ENCODE measurements at regions of chr19 and their contacts with region 1.

Region 1: GRCh38 chr19:28793391-28794168 is 419.4 kb downstream of the UQCRFS1 start:
- DNase-seq: no peak
- ATAC-seq: peak; percentile 24 to 97 (median 62)
- H3K4me3 ChIP-seq: peak overlapping the region; percentile 30 to 61 (median 51)
- H3K27ac ChIP-seq: peak overlapping the region in 5 of 10 donors; percentile 12 to 52 (median 25)
- H3K4me1 ChIP-seq: peaks cover 0 to 4% (median 0%) of the 10 kb centered on the region in 9 donors
- H3K27me3 ChIP-seq: peaks cover 0 to 33% (median 13%) of the 10 kb centered on the region in 7 donors
- CTCF ChIP-seq: no peak

Region 2: DNA sequence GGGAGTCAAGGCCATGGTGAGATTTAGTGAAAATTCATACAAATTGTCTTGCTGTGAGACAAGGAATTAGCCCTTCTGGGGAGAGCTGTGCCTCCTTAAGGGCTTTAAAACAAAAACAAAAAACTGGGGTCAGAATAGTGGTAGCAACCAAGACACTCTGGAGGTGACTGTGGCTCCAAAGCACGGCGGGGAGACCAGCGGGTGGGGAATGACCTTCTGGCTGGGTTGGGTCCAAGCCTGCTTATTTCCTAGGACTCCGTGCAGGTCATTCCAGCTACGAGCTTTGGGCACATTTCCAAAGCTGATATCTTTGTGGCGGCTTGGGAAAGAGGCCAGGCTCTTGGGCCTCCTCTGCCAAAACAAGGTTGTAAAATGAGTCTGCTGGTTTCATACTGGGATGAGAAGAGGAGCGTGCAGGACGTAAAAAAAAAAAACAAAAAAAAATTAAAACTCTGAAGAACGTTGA is 71.0 kb after region 1 on chr19:
- intact Hi-C with region 1: loop called in 1 of 10 experiments (anchors 10 kb)
- DNase-seq: peak; percentile 61 to 78
- ATAC-seq: peak; percentile 79 to 93 (median 86)
- H3K4me3 ChIP-seq: no peak overlapping the region
- H3K27ac ChIP-seq: peak overlapping the region in 8 of 10 donors; percentile 26 to 73 (median 54)
- H3K4me1 ChIP-seq: peaks cover 0 to 19% (median 12%) of the 10 kb centered on the region in 9 donors
- H3K27me3 ChIP-seq: peaks cover 0 to 7% (median 1%) of the 10 kb centered on the region in 7 donors
- CTCF ChIP-seq: no peak